Dorsolateral prefrontal cortex (tissue), 120 donors: ENCODE measurements at regions of chr1 and their contacts with region 1.

Region 1: DNA sequence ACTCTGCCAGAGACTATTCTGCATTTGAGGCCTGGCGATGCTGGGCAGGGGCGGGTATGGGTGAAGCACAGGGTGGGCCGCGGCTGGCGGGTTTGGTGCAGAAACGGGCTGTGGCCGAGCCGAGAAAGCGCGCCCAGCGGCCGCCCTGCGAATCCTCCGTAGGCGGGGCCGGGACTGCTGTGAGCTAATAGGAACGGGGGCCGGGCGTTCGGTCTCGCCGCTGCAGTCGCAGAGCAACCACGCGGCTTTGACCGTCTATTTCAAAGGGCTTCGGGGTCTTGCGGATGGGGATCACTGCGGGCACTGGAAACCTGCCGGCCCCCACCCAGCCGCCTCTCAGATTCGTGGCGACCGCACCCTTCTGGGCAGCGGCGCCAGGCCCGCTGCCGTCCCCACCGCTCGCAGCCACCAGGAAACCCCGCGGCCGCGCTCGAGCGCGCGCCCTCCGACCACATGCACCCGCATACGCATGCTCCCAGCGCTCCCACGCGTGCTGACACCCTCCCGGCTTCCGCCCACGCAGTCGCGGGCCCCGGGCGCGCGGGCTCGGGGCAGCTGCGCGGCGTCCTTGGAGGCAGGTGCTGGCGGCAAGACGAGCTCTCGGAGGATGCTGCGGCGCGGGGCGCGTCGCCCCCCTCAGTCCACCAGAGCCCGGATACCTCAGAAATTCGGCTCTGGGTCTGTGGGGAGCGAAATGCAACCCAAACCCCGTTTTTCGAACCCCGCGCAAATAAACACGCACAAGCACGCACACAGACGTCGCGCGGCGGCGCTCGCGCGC is 32.6 kb downstream of the DNTTIP2 start:
- DNase-seq: peak; percentile 77 to 90 (median 88)
- H3K4me3 ChIP-seq: peak overlapping the region; percentile 59 to 97 (median 85)
- H3K27ac ChIP-seq: peak overlapping the region; percentile 63 to 99 (median 97)
- H3K27me3 ChIP-seq: no peaks in the 10 kb centered on the region
- CTCF ChIP-seq: peak in 53 of 56 donors; percentile 19 to 64 (median 43)

Region 2: DNA sequence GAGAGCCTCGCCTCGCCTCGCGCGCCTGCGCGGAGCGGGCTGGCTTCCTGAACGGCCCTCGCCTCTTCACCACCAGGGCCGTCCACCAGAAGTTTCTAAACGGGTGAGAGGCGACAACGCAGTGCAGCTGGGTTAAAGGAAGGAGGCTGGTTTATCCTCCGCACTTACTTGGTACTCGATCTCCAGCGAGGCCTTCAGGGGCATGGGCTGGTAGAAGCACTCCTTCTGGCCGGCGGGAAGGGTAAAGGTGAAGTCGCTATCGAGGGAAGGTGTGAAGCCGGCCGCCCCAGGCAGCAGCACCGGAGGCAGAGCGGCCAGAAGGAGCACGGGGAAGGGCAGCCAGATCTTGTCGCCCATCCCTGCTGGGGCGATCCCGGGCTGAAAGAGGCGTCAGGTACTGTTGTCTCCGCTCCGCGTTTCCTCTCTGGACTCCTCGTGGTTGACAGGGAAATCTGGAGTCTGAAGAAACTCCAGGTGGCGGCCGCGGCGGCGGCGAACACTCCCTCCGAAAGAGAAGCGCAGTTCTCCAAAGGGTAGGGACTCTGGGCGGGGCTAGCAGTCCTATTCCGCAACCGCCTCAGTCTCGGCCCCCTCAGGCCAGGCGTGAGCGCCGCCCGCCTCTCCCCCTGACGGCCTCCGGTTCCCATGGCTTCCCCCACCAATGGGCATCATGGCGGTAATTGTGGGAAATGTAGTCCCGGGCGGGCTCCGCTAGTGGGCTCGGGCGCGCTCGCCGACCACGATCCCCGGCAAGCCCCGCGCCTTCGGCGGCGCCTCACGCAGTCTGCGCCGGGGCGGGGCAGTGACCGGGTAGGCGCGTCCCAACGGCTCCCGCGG is 666.3 kb before region 1 on chr1 and contains the start of gene TMED5:
- intact Hi-C with region 1: loop called in 1 of 2 experiments (anchors 10 kb)
- DNase-seq: peak; percentile 87 to 99 (median 96)
- H3K4me3 ChIP-seq: peak within 1 kb of the TSS; percentile 50 to 99 (median 90)
- H3K27ac ChIP-seq: peak within 1 kb of the TSS; percentile 73 to 100 (median 97)
- H3K27me3 ChIP-seq: no peaks in the 10 kb centered on the region
- CTCF ChIP-seq: peak in 49 of 56 donors; percentile 4 to 68 (median 41)
- total RNA-seq, gene TMED5: 21.5 to 56.2 (median 36.2) TPM

Region 3: GRCh38 chr1:93345633-93346420 is 500.6 kb before region 1 on chr1 and contains the start of gene DR1:
- intact Hi-C with region 1: loop called in 1 of 2 experiments (anchors 2 kb)
- DNase-seq: peak; percentile 84 to 94 (median 92)
- H3K4me3 ChIP-seq: peak within 1 kb of the TSS; percentile 64 to 100 (median 91)
- H3K27ac ChIP-seq: peak within 1 kb of the TSS; percentile 70 to 98 (median 94)
- H3K27me3 ChIP-seq: no peaks in the 10 kb centered on the region
- CTCF ChIP-seq: peak in 19 of 56 donors; percentile 8 to 49 (median 26)
- total RNA-seq, gene DR1: 27.3 to 45.6 (median 35.4) TPM

Region 4: DNA sequence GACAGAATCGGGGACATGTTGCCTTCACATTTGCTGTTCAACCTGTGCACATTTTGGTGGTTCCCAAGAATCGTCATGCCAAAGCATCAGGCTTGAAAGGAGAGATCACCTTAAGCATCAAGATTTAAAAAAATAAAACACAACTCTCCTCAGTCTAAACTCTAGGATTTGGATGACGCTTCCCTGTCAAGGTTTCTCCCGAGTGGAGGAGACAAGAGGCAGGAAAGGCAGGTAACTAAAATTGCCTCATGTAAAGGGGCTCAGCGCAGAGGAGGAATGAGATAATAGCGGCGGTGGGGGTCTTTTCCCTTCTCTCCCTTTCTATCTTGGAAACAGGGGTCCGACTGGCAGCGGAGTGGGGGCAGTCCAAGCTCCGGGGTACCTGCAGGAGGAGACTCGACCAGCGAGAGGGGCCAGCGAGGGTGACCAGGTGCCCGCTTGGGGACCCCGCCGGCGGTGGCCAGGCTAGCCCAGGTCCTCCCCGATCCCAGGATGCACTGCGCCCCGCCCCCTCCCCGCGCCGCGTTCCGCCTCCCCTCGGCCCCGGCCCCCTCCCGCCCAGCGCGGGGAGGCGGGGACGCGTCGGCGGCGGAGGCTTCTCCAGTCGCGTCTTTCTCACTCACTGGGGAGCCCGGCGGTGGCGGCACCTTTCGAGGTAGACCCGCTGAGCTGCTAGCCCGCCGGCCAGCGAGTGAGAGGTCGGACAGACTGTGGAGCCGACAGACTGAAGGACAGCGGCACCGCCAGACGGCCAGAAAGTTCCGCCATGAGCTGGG is 398.7 kb before region 1 on chr1 and contains the start of gene FNBP1L:
- intact Hi-C with region 1: loop called in 1 of 2 experiments (anchors 10 kb)
- DNase-seq: peak in 8 of 10 donors; percentile 31 to 78 (median 64)
- H3K4me3 ChIP-seq: peak within 1 kb of the TSS; percentile 57 to 92 (median 78)
- H3K27ac ChIP-seq: peak within 1 kb of the TSS in 43 of 59 donors; percentile 17 to 83 (median 65)
- H3K27me3 ChIP-seq: peaks cover 0 to 50% (median 24%) of the 10 kb centered on the region in 45 donors
- CTCF ChIP-seq: peak in 2 of 56 donors; percentile 3 to 7
- total RNA-seq, gene FNBP1L: 12.4 to 32.1 (median 20.8) TPM

Region 5: DNA sequence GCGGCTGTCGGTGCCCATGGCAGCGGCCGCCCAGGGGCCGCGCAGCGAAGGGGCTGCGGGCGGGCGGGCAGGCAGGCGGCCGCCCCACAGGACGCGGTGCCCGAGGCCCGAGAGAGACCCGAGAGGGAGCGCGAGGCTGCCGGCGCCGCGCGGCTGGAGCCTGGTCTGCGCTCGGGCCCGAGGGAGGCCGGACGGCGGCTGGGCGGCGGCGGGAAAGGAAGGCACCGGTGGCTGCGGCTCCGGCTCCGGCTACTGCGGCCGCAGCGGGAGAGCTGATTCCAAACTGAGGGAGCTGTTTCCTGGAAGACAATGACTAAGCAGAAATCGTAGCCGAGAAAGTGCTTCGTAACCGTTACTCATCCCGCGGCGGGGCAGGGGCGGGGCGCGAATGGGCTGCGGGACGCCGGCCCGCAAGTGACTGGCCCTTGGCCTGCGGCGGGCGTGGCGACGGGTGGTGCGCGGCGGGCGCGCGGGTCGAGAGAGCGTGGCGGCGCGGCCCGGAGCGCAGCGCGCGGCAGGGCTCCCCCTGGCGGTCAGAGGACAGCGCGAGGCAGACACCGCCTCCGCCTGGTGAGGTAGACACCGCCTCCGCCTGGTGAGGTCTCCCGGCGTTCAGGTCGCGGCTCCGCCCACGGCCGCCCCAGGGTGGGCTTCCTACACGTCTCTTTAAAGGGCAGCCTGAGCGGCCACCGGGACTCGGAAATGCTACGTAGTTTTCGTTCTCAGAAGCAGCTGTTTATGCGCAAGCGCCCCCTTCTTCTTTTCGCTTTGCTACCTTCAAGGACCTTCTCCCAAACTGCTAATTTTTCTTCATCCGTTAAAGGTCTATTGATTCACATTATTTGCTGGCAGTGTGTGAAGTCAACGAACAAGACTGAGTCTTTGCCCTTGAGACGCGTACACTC is 63.0 kb after region 1 on chr1 and contains the start of gene GCLM:
- intact Hi-C with region 1: loop called (anchors 2 kb)
- DNase-seq: peak; percentile 76 to 93 (median 84)
- H3K4me3 ChIP-seq: peak within 1 kb of the TSS; percentile 47 to 95 (median 80)
- H3K27ac ChIP-seq: peak within 1 kb of the TSS; percentile 18 to 93 (median 81)
- H3K27me3 ChIP-seq: no peaks in the 10 kb centered on the region
- CTCF ChIP-seq: peak; percentile 59 to 99 (median 88)
- total RNA-seq, gene GCLM: 13.0 to 31.9 (median 22.7) TPM

Region 6: GRCh38 chr1:93980320-93981273 is 134.2 kb after region 1 on chr1:
- intact Hi-C with region 1: no loop called
- DNase-seq: no peak
- H3K4me3 ChIP-seq: no peak overlapping the region
- H3K27ac ChIP-seq: peak overlapping the region in 38 of 59 donors; percentile 11 to 82 (median 48)
- H3K27me3 ChIP-seq: no peaks in the 10 kb centered on the region
- CTCF ChIP-seq: peak in 3 of 56 donors; percentile 12 to 24 (median 18)

Region 7: DNA sequence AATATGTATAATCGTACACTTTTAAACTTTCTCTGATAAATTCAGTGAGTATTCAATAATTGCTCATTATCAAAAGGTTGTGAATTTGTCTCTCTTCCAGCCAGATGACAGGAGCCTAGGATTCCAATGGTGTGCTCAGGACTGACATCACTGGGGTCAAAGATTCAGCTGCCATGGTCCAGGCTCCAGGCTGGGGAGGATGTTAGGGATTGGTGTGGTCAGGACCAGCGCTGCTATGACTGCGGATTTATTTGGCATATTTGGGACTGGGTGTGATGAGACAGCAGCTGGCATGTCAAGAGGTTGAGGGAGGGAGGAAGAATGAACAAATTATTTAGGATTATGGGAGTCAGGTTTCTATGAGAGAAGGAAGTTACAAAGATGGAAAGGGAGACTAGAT is 322.7 kb after region 1 on chr1:
- intact Hi-C with region 1: no loop called
- DNase-seq: no peak
- H3K4me3 ChIP-seq: no peak overlapping the region
- H3K27ac ChIP-seq: no peak overlapping the region
- H3K27me3 ChIP-seq: peaks cover 0 to 7% (median 0%) of the 10 kb centered on the region in 45 donors
- CTCF ChIP-seq: no peak